ENCODE measurements at regions of chr7 and their contacts with region 1.

Region 1: GRCh38 chr7:134547397-134548054 is 1.4 kb upstream of the AKR1B15 start:
- DNase-seq: peak; percentile 82
- H3K4me3 Mint-ChIP-seq: no peak overlapping the region
- H3K27ac Mint-ChIP-seq: no peak overlapping the region
- H3K4me1 Mint-ChIP-seq: peaks cover 3% of the 10 kb centered on the region
- H3K27me3 Mint-ChIP-seq: peaks cover 9% of the 10 kb centered on the region

Region 2: DNA sequence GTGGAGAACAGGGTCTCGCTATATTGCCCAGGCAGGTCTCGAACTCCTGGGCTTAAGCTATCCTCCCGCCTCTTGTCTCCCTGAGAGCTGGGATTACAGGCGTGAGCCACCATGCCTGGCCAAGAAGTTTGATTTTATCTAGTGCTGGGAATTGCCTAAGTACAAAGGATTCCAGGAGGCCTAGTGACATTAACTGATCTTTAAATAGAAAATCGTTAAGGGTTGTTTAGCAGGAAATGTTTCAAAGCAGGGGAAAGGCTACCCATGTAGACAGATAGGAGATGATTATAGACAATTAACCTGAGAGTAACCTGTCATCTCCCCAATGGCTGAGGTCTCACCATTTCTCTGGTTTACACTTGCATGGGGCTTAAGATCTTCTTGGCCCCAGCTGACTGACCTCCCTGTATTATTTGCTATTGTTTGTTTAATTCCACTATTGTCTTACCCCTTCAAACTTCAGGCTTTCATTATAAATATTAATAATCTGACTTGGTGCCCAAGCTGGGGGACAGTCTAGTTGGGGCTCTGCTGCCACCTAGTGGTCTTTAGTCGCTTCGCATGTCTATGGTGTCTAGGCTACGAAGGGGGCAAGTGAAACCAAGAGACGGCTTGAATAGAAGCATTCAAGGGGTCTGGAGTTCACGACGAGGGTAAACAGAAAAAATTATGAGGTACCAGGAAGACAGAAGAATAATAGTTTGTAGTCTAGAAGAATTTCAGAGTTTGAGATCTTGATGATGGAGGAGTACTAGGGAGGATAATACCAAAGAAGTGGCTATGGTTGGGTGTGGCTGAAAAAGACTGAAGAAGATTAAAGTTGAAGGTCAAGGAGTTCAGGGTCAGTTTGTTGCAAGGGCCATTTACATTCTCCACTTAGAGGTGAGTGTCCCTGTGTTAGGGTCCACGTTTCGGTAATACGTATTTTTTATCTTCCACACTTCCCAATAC is 58.7 kb after region 1 on chr7:
- CTCF ChIA-PET with region 1: interaction called, 8 read pairs
- intact Hi-C with region 1: loop called (anchors 2 kb)
- DNase-seq: peak; percentile 76
- H3K4me3 Mint-ChIP-seq: no peak overlapping the region
- H3K27ac Mint-ChIP-seq: no peak overlapping the region
- H3K4me1 Mint-ChIP-seq: peaks cover 1% of the 10 kb centered on the region
- H3K27me3 Mint-ChIP-seq: peaks cover 3% of the 10 kb centered on the region